ENCODE measurements at regions of chr2 and their contacts with region 1.

Region 1: DNA sequence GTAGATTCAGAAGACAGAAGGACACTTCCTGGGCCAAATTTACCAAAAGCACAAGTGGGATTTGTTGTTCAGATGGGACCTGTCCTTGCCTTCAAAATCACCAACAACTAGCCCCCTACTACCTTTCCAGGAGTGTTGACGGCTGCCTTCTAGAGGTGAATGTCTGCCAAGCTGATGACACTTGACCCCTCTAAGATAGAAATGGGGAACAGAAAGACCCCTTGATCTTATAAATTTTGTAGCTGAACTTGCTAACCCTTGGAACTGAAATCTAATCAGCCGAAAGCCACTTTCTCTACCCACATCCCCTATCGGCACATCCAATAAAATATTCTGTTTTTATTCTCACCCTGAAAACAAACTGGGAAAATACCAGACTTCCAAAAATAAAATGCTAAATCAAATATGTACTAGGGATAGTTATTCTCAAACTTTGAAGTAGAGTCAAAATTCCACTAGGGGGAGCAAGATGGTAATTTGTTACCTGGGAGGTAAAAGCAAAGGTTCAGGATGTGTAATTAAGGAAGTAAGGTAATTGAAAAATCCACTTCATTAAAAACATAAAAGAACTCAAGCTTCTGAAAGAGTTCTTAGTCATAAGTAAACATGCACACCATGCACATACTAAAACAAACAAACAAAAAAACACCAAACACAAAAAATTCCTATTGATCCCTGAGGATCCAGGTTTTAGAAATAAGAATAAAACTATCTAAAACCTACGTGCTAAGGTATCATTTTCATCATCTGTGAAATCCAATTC is 119.2 kb downstream of the ANKRD44 start:
- DNase-seq: no peak
- H3K4me3 ChIP-seq: no peak overlapping the region
- H3K27ac ChIP-seq: no peak overlapping the region
- H3K4me1 ChIP-seq: peaks cover 0 to 15% of the 10 kb centered on the region in 2 donors
- H3K27me3 ChIP-seq: no peaks in the 10 kb centered on the region
- CTCF ChIP-seq: peak; percentile 46 to 71 (median 52)

Region 2: DNA sequence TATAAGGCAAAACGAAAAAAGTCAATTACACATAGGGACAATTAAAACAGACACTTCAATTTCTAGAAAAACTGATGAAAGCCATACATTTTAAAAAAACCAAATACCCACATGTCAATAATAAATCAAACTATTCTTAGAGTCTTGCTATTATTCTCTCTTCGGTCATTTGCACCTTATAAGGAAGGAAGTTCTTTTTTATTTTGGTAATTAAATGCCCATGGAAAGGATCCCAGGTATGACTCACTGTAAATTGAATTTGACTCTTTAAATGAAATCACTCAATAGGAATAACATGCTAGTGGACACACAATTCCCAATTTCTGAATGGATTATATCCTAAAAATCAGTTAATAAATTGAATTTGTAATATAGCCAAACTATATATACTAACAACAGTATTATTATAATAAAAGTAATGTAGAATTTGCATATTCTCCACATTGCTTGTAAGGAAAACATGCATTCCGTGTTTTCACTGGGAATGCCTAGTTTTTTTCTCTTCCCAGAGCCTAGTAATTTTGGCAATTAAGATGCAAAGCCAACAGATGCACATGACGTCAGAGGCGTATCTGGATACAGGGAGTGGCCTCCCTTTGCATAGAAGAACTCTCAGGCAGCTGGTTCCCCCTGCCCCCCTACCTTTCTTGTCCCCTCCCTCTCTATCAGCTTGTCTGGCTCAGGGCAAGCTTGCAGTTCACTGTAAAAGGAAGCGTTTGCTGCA is 111.4 kb before region 1 on chr2:
- intact Hi-C with region 1: no loop called
- DNase-seq: no peak
- H3K4me3 ChIP-seq: no peak overlapping the region
- H3K27ac ChIP-seq: peak overlapping the region; percentile 67 to 72
- H3K4me1 ChIP-seq: peaks cover 9 to 31% of the 10 kb centered on the region in 2 donors
- H3K27me3 ChIP-seq: no peaks in the 10 kb centered on the region
- CTCF ChIP-seq: no peak

Region 3: GRCh38 chr2:197113275-197113711 is 78.1 kb before region 1 on chr2:
- intact Hi-C with region 1: loop called (anchors 5 kb)
- DNase-seq: no peak
- H3K4me3 ChIP-seq: no peak overlapping the region
- H3K27ac ChIP-seq: no peak overlapping the region
- H3K4me1 ChIP-seq: peaks cover 0 to 5% of the 10 kb centered on the region in 2 donors
- H3K27me3 ChIP-seq: no peaks in the 10 kb centered on the region
- CTCF ChIP-seq: peak; percentile 37 to 70 (median 46)

Region 4: DNA sequence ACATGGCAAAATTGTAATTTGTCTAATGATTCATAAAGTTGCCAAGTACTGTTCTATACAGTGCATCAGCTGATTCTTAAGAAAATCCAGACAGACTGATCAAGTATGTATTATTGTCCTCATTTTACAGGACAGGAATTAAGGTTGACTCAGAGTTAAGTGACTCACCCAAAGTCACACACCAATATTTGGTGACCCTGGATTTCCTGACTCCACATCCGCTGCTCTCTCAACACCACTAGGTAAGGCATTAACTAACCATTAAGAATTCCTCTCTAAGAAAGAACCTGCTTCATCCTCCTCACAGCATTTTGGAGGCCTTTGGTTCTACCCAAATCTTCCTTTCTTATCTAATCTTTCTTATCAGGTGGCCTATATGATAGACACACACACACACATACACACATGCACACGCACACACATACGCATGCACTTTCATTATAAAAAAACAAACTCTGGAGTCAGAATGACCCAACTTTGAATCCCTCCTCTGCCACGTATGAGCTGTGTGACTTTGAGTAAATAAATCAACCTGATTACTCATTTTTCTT is 31.6 kb before region 1 on chr2:
- intact Hi-C with region 1: loop called (anchors 5 kb)
- DNase-seq: no peak
- H3K4me3 ChIP-seq: no peak overlapping the region
- H3K27ac ChIP-seq: peak overlapping the region; percentile 59 to 84
- H3K4me1 ChIP-seq: peaks cover 0 to 13% of the 10 kb centered on the region in 2 donors
- H3K27me3 ChIP-seq: no peaks in the 10 kb centered on the region
- CTCF ChIP-seq: no peak

Region 5: DNA sequence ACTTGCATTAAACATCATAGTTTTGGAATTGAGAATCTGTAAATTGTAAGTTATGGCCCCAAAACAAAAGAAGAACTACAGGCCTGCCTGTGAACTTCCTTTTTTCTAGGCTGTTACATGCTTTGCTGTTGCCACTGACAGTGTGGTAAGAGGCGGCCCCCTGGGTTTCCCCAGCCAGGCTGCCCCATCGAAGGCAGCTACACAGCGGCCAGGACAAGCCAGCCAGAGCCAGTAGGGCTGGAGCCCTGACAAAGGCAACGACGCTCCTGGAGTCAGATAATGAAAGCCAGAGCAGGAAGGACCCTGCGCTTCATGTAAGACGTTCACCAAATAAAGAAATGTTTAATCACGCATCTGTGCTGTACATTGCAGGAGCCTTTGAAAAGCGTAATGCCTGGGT is 64.2 kb after region 1 on chr2:
- intact Hi-C with region 1: loop called (anchors 5 kb)
- DNase-seq: peak; percentile 45 to 84
- H3K4me3 ChIP-seq: peak overlapping the region in 1 of 2 donors; percentile 35
- H3K27ac ChIP-seq: peak overlapping the region; percentile 55 to 59
- H3K4me1 ChIP-seq: peaks cover 0 to 12% of the 10 kb centered on the region in 2 donors
- H3K27me3 ChIP-seq: no peaks in the 10 kb centered on the region
- CTCF ChIP-seq: no peak

Region 6: GRCh38 chr2:197378494-197379307 is 187.3 kb after region 1 on chr2:
- intact Hi-C with region 1: loop called (anchors 2 kb)
- DNase-seq: no peak
- H3K4me3 ChIP-seq: peak overlapping the region; percentile 43 to 54
- H3K27ac ChIP-seq: peak overlapping the region; percentile 50 to 51
- H3K4me1 ChIP-seq: no peaks in the 10 kb centered on the region
- H3K27me3 ChIP-seq: no peaks in the 10 kb centered on the region
- CTCF ChIP-seq: peak; percentile 69 to 79 (median 71)